ENCODE measurements at regions of chr12 and their contacts with region 1.

Region 1: DNA sequence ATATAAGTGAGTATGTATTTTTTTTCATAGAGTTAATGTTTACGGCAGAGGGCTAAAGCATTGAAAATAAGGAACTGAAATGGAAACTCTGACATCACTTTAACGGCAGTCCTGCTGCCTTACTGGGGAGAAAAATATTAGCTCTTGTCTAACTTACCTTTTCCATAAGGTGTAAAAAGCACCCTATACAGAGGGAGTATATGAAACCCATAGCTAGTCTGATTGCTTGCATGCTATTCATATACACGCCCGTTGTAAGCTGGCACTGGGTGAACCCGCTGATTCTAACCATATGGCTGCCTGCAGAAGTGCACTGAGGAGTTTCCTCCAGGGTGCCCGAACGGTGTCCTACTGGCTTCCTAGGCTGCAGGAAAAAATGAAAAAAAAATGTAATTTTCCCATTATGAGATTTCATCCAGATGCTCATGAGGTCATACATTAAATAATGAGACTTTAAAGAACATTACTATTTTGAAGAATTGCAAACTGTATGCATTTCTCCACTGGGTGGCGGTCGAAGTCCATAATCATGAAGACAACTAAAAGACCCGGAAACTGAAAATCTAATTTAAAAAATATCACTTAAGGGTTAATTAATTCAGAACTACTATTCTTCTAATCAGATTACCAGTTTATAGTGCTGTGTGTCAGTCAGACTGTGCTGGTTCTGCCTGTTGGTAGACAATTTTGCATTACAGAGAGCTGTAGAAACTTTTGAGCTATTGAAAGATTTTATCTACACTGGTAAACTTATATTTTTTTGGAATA is 144.7 kb downstream of the ALX1 start:
- DNase-seq: peak; percentile 88
- H3K4me3 ChIP-seq: no peak overlapping the region
- H3K27ac ChIP-seq: no peak overlapping the region
- H3K4me1 ChIP-seq: peaks cover 24% of the 10 kb centered on the region
- H3K27me3 ChIP-seq: no peaks in the 10 kb centered on the region
- CTCF ChIP-seq: peak; percentile 84

Region 2: DNA sequence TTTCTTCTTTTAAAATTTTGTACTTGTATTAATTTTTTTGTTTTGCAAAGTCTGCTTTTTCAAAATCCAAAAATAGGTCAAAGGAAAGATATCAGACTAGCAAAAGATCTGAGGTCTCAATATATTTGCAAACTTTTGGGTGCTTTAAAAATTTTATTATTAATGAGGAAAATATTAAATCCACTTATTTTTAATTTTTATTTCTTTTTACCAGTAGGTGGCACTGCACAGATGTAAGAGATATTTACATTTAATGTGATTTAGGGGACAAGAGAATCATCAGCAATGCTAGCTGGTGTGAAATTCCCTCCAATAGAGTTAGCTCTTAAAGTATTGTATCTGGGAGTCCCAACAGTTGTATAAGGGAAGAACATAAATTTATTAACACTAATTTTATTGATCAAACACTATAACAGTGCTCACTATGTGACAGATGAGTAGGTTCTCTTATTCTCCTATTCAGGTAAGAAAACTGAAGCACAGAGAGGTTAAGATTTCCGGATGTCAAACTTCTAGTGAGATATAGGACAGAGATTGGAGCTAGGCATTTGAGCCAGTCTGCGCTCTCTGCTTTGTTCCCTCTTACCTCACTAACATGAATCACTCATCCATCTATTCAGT is 114.2 kb before region 1 on chr12:
- CTCF ChIA-PET with region 1: interaction called, 5 read pairs
- POLR2A ChIA-PET with region 1: no interaction called
- intact Hi-C with region 1: loop called (anchors 5 kb)
- DNase-seq: peak; percentile 60
- H3K4me3 ChIP-seq: no peak overlapping the region
- H3K27ac ChIP-seq: peak overlapping the region; percentile 6
- H3K4me1 ChIP-seq: peaks cover 24% of the 10 kb centered on the region
- H3K27me3 ChIP-seq: no peaks in the 10 kb centered on the region
- CTCF ChIP-seq: peak; percentile 67

Measured in A673 (cell line).